ENCODE measurements at regions of chr12 and their contacts with region 1.

Region 1: DNA sequence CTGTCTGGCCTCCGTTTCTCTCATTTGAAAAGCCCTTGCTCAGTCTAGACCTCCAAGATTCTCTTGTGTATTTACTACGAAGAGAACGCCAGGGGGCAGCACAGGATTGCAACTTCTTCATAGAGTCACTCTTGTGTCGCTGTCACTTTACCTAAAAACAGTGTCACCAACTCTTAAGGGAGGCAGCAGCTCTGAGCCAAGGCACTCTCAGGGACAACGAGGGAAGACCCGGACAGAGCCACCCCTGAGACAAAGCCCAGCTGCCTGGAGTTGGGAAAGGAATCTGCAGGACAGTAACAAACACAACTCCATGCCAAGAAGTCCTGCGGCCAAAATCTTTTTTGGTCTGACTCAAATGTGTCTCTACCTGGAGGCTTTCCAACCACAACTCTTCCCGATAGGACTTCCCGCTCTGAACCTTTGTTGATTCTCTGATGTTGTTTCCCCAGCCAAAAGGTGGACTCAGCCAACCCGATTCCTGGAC is 9.6 kb upstream of the RPAP3 start:
- DNase-seq: peak; percentile 89
- ATAC-seq: peak; percentile 57

Region 2: DNA sequence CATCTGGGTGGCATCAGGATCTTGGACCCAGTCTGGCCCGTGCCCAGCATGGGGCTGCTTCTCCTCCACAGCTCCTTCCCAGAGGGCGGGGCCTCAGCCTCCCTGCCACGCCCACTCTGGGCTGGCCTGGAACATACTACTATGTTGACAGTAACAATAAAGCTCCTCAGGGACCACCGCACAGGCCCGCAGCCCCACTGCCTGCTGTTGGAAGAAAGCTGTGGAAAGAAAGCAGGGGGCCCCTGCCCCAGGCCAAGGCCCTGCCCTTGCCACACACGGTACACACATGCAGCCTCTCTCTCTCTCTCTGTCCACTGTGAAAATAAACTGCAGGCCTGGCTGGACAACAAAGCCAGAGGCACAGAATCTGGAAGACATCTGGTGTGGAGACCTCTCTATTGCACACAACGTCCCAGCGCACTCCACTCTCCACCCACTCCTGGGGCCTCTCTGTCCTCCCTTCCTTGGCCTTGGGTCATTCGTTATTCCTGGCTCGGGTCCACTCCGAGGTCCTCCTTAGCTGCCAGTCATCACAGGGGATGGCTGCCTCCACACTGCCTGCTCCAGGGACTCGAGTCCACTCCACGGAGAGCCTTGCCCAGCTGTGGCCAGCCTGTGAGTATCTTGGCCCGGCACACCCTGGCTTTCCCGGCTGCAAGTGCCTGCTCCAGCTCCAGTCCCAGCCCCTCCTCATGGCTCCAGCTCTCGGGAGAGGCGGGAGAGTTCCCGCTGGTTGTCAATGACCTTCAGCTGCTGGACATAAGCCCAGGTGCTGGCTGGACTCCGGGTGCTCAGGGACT is 21.6 kb after region 1 on chr12:
- intact Hi-C with region 1: loop called (anchors 2 kb)
- DNase-seq: peak; percentile 93
- ATAC-seq: peak; percentile 87

Region 3: DNA sequence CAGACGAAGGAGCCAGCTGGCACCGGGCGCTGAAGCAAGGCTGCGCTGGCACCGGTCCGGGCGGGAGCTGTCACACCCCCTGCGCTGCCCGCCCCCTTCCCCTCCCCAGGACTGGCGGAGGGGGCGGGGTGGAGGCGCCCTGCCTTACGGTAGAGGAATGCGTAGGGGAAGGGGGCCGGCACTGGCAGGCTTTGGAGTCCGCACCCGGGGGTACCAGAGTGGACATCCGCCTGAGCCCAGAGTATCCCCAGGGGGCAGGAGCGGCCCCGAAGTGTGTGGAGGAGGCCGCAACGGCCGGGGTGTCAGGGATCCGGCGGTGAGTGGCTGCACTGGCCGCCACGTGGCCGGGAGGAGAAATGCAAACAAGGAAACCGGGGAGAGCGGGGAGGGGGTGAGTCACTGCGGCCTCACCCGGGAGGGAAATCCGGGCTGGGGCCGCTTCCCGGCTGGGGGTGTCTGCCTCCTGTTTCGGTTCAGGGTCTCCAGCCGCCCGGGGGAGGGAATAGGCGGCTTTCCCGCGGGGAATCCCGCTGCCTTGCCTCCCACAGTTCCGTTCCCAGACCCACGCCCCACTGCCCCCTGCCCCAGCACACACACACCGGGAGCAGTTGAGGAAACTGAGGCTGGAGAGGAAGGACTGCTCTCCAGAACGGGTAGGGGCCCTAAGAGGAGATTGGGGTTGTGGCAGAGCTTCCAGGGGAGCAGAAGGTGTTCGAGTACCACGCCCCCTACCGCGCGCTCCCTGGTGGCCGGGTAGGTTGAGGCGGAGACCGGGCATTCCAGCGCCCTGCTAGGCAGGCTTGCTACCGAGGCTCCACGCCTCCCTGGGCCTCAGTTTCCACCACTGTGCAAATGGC is 43.6 kb after region 1 on chr12 and contains the start of gene RAPGEF3:
- intact Hi-C with region 1: loop called (anchors 1 kb)
- DNase-seq: peak; percentile 93
- ATAC-seq: peak; percentile 89
- total RNA-seq, gene RAPGEF3: 37.3 TPM

Region 4: DNA sequence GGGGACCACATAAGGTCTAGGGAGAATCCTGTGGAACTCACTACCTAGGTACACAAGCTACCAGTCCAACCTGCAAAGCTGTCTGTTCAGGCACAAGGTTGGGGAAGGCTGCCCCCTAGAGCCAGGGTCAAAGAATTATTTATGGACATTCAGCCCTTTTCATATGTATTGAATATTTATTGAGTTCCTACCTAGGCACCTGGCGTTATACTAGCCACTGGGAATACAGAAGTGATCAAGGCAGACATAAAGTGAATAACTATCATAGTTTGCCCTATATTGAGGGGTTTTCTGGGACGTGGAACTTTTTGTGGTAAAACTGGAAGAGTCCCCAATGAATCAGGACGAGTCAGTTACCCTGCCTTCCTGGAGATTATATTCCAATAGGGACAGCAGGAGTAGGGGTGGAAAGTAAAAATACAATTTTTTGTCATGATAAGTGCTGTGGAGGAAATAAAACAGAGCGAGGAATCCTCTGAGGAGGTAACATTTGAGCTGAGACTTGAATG is 51.8 kb after region 1 on chr12:
- intact Hi-C with region 1: loop called (anchors 1 kb)
- DNase-seq: no peak
- ATAC-seq: no peak

Region 5: GRCh38 chr12:47779301-47779942 is 64.0 kb after region 1 on chr12:
- intact Hi-C with region 1: loop called (anchors 1 kb)
- DNase-seq: peak; percentile 92
- ATAC-seq: peak; percentile 80

Region 6: GRCh38 chr12:47837190-47838171 is 122.0 kb after region 1 on chr12:
- intact Hi-C with region 1: loop called (anchors 1 kb)
- DNase-seq: peak; percentile 83
- ATAC-seq: peak; percentile 76

Region 7: DNA sequence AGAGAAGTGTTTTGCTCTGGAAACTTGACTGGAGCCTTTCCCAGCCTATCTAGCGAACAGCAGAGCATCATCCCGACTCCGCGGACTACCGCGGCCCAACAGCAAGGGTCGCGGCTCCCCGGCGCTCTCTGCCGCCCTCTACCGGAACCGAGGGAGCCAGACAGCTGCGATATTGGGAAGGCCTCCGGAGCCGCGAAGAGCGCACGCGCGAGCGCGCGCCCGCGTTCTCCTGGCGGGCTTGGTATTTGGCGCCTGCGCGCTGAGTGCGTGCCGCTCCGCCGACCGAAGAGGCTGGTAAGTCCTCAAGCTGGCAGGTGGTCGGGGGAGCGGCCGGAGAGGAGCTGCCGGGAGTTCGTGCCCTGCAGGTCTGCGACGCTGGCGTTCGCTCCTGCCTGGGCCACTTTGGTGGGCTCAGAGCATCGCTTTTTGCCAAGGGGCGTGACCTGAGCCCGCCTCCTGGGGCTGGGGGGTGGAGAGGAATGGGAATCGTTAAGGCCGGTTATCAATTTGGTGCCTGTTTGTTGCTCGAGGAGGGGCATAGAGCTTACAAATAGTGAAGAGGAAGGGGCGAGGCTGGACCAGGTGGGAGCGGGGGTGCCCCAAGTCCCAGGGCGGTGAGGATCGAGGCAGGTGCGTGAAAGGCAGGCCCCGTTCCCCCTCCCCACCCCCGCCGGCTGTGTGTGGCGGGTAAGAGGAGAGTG is 248.1 kb after region 1 on chr12 and contains the start of gene TMEM106C:
- intact Hi-C with region 1: loop called (anchors 10 kb)
- DNase-seq: peak; percentile 95
- ATAC-seq: peak; percentile 95
- total RNA-seq, gene TMEM106C: 45.6 TPM

Measured in Right ventricle myocardium inferior (tissue), 1 donor.